OCI-LY7 (cell line): ENCODE measurements at regions of chr12 and their contacts with region 1.

Region 1: GRCh38 chr12:54032627-54033100 is at the start of gene HOXC5:
- DNase-seq: peak; percentile 75
- H3K4me3 ChIP-seq: peak within 1 kb of the TSS; percentile 47
- H3K27ac ChIP-seq: no peak within 1 kb of the TSS
- H3K4me1 ChIP-seq: peaks cover 46% of the 10 kb centered on the region
- CTCF ChIP-seq: peak; percentile 99
- total RNA-seq, gene HOXC5: not detected in 2 replicates

Region 2: DNA sequence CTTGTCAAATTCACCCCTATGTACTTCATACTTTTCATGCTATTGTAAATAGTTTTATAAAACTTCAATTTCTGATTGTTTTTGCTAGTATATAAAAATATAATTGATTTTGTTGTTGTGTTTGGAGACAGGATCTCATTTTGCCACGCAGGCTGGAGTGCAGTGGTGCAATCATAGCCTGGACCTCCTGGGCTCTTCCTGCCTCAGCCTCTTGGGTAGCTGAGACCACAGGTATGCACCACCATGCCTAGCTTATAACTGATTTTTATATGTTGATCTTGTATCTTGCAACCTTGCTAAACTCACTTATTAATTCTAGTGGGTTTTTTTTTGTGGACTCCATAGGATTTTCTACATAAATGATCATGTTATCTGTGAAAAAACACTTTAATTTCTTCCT is 380.3 kb before region 1 on chr12:
- CTCF ChIA-PET with region 1: no interaction called
- POLR2A ChIA-PET with region 1: no interaction called
- intact Hi-C with region 1: no loop called
- DNase-seq: no peak
- H3K4me3 ChIP-seq: no peak overlapping the region
- H3K27ac ChIP-seq: no peak overlapping the region
- H3K4me1 ChIP-seq: no peaks in the 10 kb centered on the region
- CTCF ChIP-seq: no peak

Region 3: GRCh38 chr12:54017878-54018467 is 14.7 kb before region 1 on chr12:
- CTCF ChIA-PET with region 1: interaction called, 14 read pairs
- POLR2A ChIA-PET with region 1: interaction called, 10 read pairs
- intact Hi-C with region 1: no loop called
- DNase-seq: peak; percentile 98
- H3K4me3 ChIP-seq: peak overlapping the region; percentile 77
- H3K27ac ChIP-seq: peak overlapping the region; percentile 83
- H3K4me1 ChIP-seq: peaks cover 49% of the 10 kb centered on the region
- CTCF ChIP-seq: no peak

Region 4: GRCh38 chr12:54134850-54135249 is 102.2 kb after region 1 on chr12:
- CTCF ChIA-PET with region 1: no interaction called
- POLR2A ChIA-PET with region 1: no interaction called
- intact Hi-C with region 1: loop called (anchors 2 kb)
- DNase-seq: peak; percentile 27
- H3K4me3 ChIP-seq: no peak overlapping the region
- H3K27ac ChIP-seq: no peak overlapping the region
- H3K4me1 ChIP-seq: no peaks in the 10 kb centered on the region
- CTCF ChIP-seq: peak; percentile 58

Region 5: DNA sequence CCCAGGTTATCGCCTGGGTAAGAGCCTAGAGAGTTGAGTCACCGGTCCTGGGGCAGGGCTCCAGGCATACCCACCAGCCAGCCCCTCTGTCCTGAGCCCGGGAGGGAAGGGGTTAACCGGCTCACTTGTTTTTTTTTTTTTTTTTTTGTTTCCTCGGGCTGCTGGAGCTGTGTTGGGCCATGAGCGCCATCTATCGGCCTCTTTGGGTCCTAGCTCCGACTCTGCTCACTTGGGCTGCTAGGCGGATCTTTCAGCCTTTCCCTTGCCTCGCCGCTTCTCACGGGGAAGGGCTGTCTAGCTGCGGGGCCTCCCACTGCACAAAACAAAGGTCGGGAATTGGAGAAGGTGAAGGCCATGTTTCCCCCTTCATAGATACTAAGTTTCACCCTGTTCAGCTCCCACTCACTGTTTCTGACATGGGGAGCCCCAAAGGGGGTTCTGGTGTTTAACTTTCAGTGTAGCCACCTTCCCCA is 158.9 kb after region 1 on chr12:
- CTCF ChIA-PET with region 1: interaction called, 10 read pairs
- POLR2A ChIA-PET with region 1: interaction called, 4 read pairs
- intact Hi-C with region 1: loop called (anchors 1 kb)
- DNase-seq: peak; percentile 89
- H3K4me3 ChIP-seq: no peak overlapping the region
- H3K27ac ChIP-seq: no peak overlapping the region
- H3K4me1 ChIP-seq: peaks cover 54% of the 10 kb centered on the region
- CTCF ChIP-seq: peak; percentile 82

Region 6: DNA sequence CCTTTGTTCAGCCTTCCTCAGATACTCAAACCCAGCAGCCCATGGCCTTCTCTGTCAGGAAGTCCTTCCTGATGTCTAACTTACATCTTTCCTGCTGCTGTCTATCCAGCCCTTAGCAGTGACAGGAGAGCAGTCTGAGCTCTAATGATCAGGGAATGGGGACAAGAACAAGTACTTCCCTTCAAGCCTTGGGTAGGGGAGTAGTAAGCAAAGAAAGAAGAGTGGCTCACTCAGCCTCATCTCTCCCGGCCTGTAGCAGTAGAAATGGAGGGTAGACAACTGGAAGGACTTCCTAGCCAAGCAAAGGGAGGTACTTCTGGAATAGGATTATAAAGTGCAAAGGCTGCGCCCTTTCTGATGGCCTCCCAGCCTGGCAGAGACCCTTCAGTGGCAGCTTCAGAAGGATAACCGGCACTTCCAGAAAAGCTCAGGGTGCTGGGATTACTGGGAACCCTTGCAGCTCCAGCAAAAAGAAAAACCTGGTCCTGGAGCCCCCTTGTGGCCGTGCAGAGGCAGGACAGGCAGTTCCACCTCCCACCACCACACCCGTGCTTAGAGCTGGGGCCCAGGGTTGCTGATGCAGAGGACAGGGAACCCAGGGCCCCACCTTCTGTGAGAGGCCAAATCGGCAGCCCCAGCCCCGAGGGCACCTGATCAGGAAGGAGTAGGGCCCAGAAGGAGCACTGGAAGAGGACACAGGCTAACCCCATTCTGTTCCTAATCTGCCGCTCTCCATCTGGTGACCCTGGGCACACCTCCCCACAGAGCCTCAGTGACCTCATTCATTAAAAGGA is 168.5 kb after region 1 on chr12:
- CTCF ChIA-PET with region 1: interaction called, 9 read pairs
- POLR2A ChIA-PET with region 1: interaction called, 9 read pairs
- intact Hi-C with region 1: loop called (anchors 1 kb)
- DNase-seq: peak; percentile 77
- H3K4me3 ChIP-seq: no peak overlapping the region
- H3K27ac ChIP-seq: no peak overlapping the region
- H3K4me1 ChIP-seq: peaks cover 19% of the 10 kb centered on the region
- CTCF ChIP-seq: peak; percentile 99